ENCODE measurements at regions of chr2 and their contacts with region 1.

Region 1: GRCh38 chr2:216114714-216115557 is 5.8 kb downstream of the XRCC5 start:
- DNase-seq: peak; percentile 92
- CTCF ChIP-seq: peak; percentile 76

Region 2: GRCh38 chr2:216130346-216130971 is 15.5 kb after region 1 on chr2:
- CTCF ChIA-PET with region 1: interaction called, 25 read pairs
- POLR2A ChIA-PET with region 1: interaction called, 3 read pairs
- DNase-seq: no peak
- CTCF ChIP-seq: no peak